ENCODE measurements at regions of chr6 and their contacts with region 1.

Region 1: GRCh38 chr6:20212392-20213217 is at the start of gene MBOAT1:
- DNase-seq: peak; percentile 72
- H3K4me3 Mint-ChIP-seq: peak within 1 kb of the TSS; percentile 93
- H3K27ac Mint-ChIP-seq: peak within 1 kb of the TSS; percentile 95
- H3K4me1 Mint-ChIP-seq: peaks cover 48% of the 10 kb centered on the region
- H3K27me3 Mint-ChIP-seq: peaks cover 7% of the 10 kb centered on the region
- total RNA-seq, gene MBOAT1: 12.2 and 13.5 TPM in 2 replicates

Region 2: GRCh38 chr6:18264219-18264922 is 1948.2 kb before region 1 on chr6 and contains the start of gene DEK:
- intact Hi-C with region 1: loop called (anchors 5 kb)
- DNase-seq: peak; percentile 77
- H3K4me3 Mint-ChIP-seq: peak within 1 kb of the TSS; percentile 87
- H3K27ac Mint-ChIP-seq: peak within 1 kb of the TSS; percentile 91
- H3K4me1 Mint-ChIP-seq: peaks cover 48% of the 10 kb centered on the region
- H3K27me3 Mint-ChIP-seq: peaks cover 4% of the 10 kb centered on the region
- total RNA-seq, gene DEK: 163 and 170 TPM in 2 replicates

Region 3: GRCh38 chr6:20126789-20127653 is 85.6 kb before region 1 on chr6:
- intact Hi-C with region 1: loop called (anchors 1 kb)
- DNase-seq: peak; percentile 46
- H3K4me3 Mint-ChIP-seq: no peak overlapping the region
- H3K27ac Mint-ChIP-seq: no peak overlapping the region
- H3K4me1 Mint-ChIP-seq: peaks cover 8% of the 10 kb centered on the region
- H3K27me3 Mint-ChIP-seq: no peaks in the 10 kb centered on the region

Region 4: DNA sequence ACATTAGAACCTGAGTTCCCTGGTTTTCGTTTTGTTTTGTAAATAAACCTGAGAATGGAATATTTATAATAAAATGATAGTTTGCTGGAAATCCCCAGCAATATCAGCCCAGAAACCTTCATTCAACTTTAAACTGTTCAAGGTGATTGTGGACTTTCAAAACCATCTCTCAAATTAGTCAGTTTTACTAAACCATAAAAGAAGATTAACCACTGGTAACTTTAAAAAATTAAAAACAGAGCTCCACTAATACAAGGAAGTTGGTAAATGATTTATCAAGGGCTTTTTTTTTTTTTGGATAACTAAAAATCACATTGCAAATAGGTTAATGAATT is 10.3 kb before region 1 on chr6:
- intact Hi-C with region 1: loop called (anchors 1 kb)
- DNase-seq: no peak
- H3K4me3 Mint-ChIP-seq: no peak overlapping the region
- H3K27ac Mint-ChIP-seq: peak overlapping the region; percentile 30
- H3K4me1 Mint-ChIP-seq: peaks cover 77% of the 10 kb centered on the region
- H3K27me3 Mint-ChIP-seq: no peaks in the 10 kb centered on the region

Region 5: DNA sequence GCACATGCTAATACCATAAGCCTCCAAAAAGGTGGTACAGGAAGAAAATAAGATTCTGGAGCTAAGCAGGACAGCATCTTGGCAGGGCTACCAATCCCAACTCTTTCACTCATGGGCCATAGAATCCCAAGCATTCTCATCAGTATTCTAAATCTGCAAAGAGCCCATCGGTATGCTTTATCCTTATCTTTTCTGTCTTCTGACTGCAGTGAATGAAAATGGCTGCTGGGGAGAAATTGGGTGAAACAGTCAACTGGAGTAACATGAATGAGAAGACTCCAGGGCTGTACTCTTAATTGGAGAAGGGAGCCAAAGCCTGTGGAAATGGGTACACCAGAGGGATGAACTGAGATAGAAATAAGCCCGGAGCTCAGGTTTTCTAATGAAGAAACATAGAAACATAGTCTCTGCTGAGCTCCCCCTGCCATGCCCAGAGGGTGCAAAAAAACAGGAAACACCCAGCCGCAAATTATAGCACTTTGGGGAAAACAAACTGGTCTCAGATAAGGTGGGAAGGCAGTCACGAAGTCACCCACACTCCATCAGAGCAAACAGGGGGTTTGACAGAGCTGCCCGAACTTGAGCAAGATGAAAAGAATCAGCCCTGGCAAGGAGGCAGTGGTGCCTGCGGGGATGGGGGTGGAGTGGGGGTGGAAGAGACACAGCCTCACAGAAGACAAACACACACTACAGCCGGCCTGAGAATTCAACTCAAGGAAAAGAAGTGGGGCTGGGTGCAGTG is 153.7 kb after region 1 on chr6:
- intact Hi-C with region 1: loop called (anchors 5 kb)
- DNase-seq: peak; percentile 42
- H3K4me3 Mint-ChIP-seq: peak overlapping the region; percentile 67
- H3K27ac Mint-ChIP-seq: peak overlapping the region; percentile 94
- H3K4me1 Mint-ChIP-seq: peaks cover 58% of the 10 kb centered on the region
- H3K27me3 Mint-ChIP-seq: no peaks in the 10 kb centered on the region

Measured in activated T-helper 1 cell treated with anti-CD3 and anti-CD28 coated beads, Interleukin-12 subunit alpha, Interleukin-12 subunit beta, Interleukin-2, Interleukin-4 antibody, amounts not matched to agents 30 ng/mL and 10 ng/mL and 1 ng/mL, durations not matched to agents 14 hours and 24 hours and 36 hours (primary cell).